ENCODE measurements at regions of chr20 and their contacts with region 1.

Region 1: GRCh38 chr20:58870239-58871014 is 17.9 kb downstream of the GNAS start:
- DNase-seq: peak; percentile 61 to 79 (median 74)
- ATAC-seq: peak; percentile 94
- H3K4me3 ChIP-seq: no peak overlapping the region
- H3K27ac ChIP-seq: no peak overlapping the region
- H3K4me1 ChIP-seq: peaks cover 0 to 3% of the 10 kb centered on the region in 2 experiments; a peak in 3 of 5 replicates
- H3K27me3 ChIP-seq: peaks cover 0 to 6% of the 10 kb centered on the region in 2 experiments; a peak in 1 of 5 replicates
- CTCF ChIP-seq: peak; percentile 80 to 89 (median 88)
- EP300 ChIP-seq: no peak
- POLR2A ChIP-seq: no peak
- RAD21 ChIP-seq: peak; percentile 81 to 94

Region 2: GRCh38 chr20:59087829-59088433 is 217.5 kb after region 1 on chr20:
- CTCF ChIA-PET with region 1: interaction called, 6 read pairs
- POLR2A ChIA-PET with region 1: no interaction called
- in situ Hi-C with region 1: no loop called
- intact Hi-C with region 1: loop called (anchors 2 kb)
- DNase-seq: peak; percentile 74 to 83 (median 78)
- ATAC-seq: peak; percentile 96
- H3K4me3 ChIP-seq: no peak overlapping the region
- H3K27ac ChIP-seq: no peak overlapping the region
- H3K4me1 ChIP-seq: no peaks in the 10 kb centered on the region
- H3K27me3 ChIP-seq: peaks cover 18 to 29% of the 10 kb centered on the region in 2 experiments
- CTCF ChIP-seq: peak; percentile 83 to 87 (median 86)
- EP300 ChIP-seq: no peak
- POLR2A ChIP-seq: no peak
- RAD21 ChIP-seq: peak; percentile 48 to 74; a peak in 3 of 4 replicates

Region 3: DNA sequence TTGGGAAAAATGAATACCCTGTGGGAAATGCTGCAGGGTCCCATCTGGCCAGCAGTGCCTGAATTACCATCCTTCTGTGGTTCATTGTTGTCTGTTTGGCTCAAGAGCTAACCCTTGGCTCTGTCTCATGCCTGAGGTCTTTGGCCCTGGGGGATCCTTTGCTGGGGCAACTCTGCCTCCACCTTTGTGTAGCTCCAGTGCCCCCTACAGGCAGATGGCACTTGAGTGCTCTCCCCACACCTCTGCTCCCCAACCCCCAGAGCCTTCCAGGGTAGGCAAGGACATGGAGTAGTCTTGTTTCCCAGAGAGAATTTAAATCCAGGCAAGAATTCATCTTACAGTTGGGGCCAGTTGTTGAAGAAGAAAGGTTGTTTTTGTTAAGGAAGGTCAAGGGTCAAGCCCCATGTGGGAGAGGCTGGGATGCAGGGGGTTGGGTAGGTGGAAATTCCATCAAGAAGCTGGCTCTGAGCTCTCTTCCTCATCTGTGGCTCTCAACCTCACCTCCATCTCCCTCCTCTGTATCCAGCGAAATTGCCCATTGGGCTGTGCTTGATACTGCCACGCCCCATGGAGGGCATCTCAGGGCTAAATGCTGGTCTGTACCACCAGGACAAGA is 337.4 kb after region 1 on chr20:
- CTCF ChIA-PET with region 1: interaction called, 31 read pairs
- POLR2A ChIA-PET with region 1: no interaction called
- in situ Hi-C with region 1: no loop called
- intact Hi-C with region 1: loop called (anchors 1 kb)
- DNase-seq: peak; percentile 61 to 72 (median 64)
- ATAC-seq: peak; percentile 95
- H3K4me3 ChIP-seq: no peak overlapping the region
- H3K27ac ChIP-seq: no peak overlapping the region
- H3K4me1 ChIP-seq: no peaks in the 10 kb centered on the region
- H3K27me3 ChIP-seq: peaks cover 2 to 33% of the 10 kb centered on the region in 2 experiments; a peak in 4 of 5 replicates
- CTCF ChIP-seq: peak; percentile 73 to 87 (median 78)
- EP300 ChIP-seq: no peak
- POLR2A ChIP-seq: no peak
- RAD21 ChIP-seq: peak; percentile 63 to 86

Region 4: GRCh38 chr20:59222253-59223181 is 352.1 kb after region 1 on chr20:
- CTCF ChIA-PET with region 1: interaction called, 59 read pairs
- POLR2A ChIA-PET with region 1: no interaction called
- in situ Hi-C with region 1: loop called (anchors 5 kb)
- intact Hi-C with region 1: loop called (anchors 1 kb)
- DNase-seq: peak; percentile 76 to 86 (median 84)
- ATAC-seq: peak; percentile 100
- H3K4me3 ChIP-seq: peak overlapping the region; percentile 10; the same call in 1 of the 2 replicates
- H3K27ac ChIP-seq: no peak overlapping the region
- H3K4me1 ChIP-seq: peaks cover 0 to 9% of the 10 kb centered on the region in 2 experiments; a peak in 2 of 5 replicates
- H3K27me3 ChIP-seq: peaks cover 29 to 40% of the 10 kb centered on the region in 2 experiments
- CTCF ChIP-seq: peak; percentile 88 to 92 (median 91)
- EP300 ChIP-seq: no peak
- POLR2A ChIP-seq: no peak
- RAD21 ChIP-seq: peak; percentile 76 to 83

Region 5: GRCh38 chr20:59403261-59403961 is 533.0 kb after region 1 on chr20:
- CTCF ChIA-PET with region 1: interaction called, 11 read pairs
- POLR2A ChIA-PET with region 1: interaction called, 4 read pairs
- in situ Hi-C with region 1: no loop called
- intact Hi-C with region 1: loop called (anchors 5 kb)
- DNase-seq: peak; percentile 59 to 96 (median 92)
- ATAC-seq: peak; percentile 97
- H3K4me3 ChIP-seq: no peak overlapping the region
- H3K27ac ChIP-seq: no peak overlapping the region
- H3K4me1 ChIP-seq: peaks cover 0 to 9% of the 10 kb centered on the region in 2 experiments; a peak in 2 of 5 replicates
- H3K27me3 ChIP-seq: peaks cover 12 to 57% of the 10 kb centered on the region in 2 experiments; a peak in 4 of 5 replicates
- CTCF ChIP-seq: peak; percentile 87 to 91 (median 87)
- EP300 ChIP-seq: no peak
- POLR2A ChIP-seq: no peak
- RAD21 ChIP-seq: peak; percentile 67 to 87

Region 6: GRCh38 chr20:59412875-59413284 is 542.5 kb after region 1 on chr20:
- CTCF ChIA-PET with region 1: no interaction called
- POLR2A ChIA-PET with region 1: interaction called, 4 read pairs
- in situ Hi-C with region 1: loop called (anchors 5 kb)
- intact Hi-C with region 1: no loop called
- DNase-seq: no peak
- ATAC-seq: no peak
- H3K4me3 ChIP-seq: no peak overlapping the region
- H3K27ac ChIP-seq: no peak overlapping the region
- H3K4me1 ChIP-seq: no peaks in the 10 kb centered on the region
- H3K27me3 ChIP-seq: peaks cover 5 to 35% of the 10 kb centered on the region in 2 experiments; a peak in 3 of 5 replicates
- CTCF ChIP-seq: no peak
- EP300 ChIP-seq: no peak
- POLR2A ChIP-seq: no peak
- RAD21 ChIP-seq: peak in 1 of 2 experiments; percentile 26; a peak in 1 of 4 replicates